ENCODE measurements at regions of chr5 and their contacts with region 1.

Region 1: GRCh38 chr5:73321757-73322436 is 126.7 kb downstream of the FOXD1 start:
- DNase-seq: peak; percentile 99
- H3K4me3 ChIP-seq: no peak overlapping the region
- H3K27ac ChIP-seq: peak overlapping the region; percentile 70
- H3K4me1 ChIP-seq: peaks cover 24% of the 10 kb centered on the region
- H3K27me3 ChIP-seq: no peaks in the 10 kb centered on the region
- CTCF ChIP-seq: no peak

Region 2: DNA sequence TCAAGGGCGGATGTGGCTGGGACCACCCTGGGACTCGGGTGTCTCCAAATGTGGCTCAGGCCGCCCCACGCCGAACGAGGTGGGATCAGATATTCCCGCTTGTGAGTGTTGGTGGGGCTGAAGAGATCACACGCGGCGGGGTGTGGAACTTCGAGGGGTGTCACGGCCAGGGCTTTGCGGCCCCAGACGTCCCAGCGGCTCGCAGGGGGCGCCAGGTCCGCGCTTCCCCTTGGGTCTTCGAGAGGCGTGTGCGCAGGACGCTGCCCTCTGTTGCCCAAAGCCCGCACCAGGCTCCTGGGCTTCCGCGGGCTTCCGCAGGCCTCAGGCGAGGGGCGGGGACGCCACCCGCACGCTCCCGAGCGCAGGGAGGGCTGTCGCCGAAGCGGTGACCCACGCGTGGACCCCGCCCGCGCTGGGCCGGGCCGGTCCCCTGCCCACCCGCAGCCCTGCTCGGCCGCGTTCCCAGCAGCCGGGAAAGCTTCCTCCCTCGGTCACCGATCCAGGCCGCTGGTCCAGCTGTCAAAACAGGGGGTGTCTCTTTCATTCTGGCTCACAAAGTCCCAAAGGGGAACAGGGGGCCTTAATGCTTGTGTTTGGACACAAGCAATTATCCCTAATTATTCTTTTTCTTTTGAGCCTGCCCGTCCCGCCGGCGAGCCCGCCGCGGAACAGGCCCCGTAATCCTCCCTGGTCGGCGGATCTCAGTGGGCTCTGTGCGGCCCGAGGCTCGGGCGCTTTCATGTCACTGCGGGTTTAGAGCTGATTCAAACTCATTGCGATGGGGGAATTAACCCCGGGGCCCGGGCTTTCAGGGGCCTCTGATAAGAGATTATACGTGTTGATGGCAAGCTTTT is 88.3 kb before region 1 on chr5:
- CTCF ChIA-PET with region 1: no interaction called
- dilution Hi-C with region 1: loop called (anchors 5 kb)
- in situ Hi-C with region 1: no loop called
- intact Hi-C with region 1: no loop called
- DNase-seq: no peak
- H3K4me3 ChIP-seq: no peak overlapping the region
- H3K27ac ChIP-seq: no peak overlapping the region
- H3K4me1 ChIP-seq: peaks cover 28% of the 10 kb centered on the region
- H3K27me3 ChIP-seq: no peaks in the 10 kb centered on the region
- CTCF ChIP-seq: no peak

Region 3: GRCh38 chr5:73311291-73312110 is 10.4 kb before region 1 on chr5:
- CTCF ChIA-PET with region 1: no interaction called
- dilution Hi-C with region 1: no loop called
- in situ Hi-C with region 1: no loop called
- intact Hi-C with region 1: loop called (anchors 1 kb)
- DNase-seq: peak; percentile 85
- H3K4me3 ChIP-seq: peak overlapping the region in 1 of 3 experiments; percentile 3
- H3K27ac ChIP-seq: peak overlapping the region; percentile 63
- H3K4me1 ChIP-seq: peaks cover 29% of the 10 kb centered on the region
- H3K27me3 ChIP-seq: no peaks in the 10 kb centered on the region
- CTCF ChIP-seq: no peak

Region 4: DNA sequence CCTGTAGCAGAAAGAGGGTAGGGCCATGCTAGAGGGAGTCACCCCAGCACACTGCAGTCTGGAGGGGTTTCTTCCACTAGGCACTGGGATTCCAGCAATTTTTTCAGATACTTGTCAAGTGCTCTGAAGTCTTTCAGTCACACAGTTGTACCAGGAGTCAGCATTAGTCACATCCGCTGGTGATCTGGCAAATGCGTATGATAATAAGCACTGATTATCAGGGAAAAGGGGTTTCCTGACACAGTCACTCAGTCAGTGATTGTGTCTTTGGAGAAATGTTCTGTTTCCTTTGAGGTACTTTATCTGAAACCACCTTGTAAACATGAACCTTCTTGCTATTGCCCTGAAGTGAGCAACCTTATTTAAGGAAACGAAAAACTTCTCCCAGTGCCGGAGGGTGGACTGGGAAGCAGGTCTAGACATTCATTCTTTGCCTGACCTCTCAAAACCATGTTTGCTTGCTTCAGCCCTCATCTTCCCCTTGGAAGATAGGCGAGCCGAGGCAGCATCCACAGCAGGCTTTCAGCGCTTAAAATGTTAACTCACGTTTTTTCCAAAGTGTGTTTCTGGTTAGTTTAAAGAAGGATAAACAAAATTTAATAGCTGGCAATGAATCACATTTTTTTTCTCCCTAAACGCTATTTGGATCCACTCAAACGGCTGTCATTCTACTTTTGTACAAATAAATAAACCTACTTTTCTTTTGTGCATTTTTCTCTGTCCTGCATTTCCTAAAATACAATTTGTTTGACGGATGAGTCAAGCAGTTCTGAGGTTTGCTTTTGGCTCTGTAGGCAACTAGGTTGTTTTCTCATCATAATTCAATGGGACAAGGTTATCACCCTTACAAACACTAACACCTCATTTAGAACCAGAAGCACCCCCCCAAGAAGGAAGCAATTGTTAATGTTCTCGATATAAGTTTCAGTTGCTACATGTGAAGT is 49.0 kb after region 1 on chr5:
- CTCF ChIA-PET with region 1: no interaction called
- dilution Hi-C with region 1: no loop called
- in situ Hi-C with region 1: loop called in 1 of 2 experiments (anchors 5 kb)
- intact Hi-C with region 1: loop called (anchors 1 kb)
- DNase-seq: peak; percentile 99
- H3K4me3 ChIP-seq: no peak overlapping the region
- H3K27ac ChIP-seq: peak overlapping the region; percentile 83
- H3K4me1 ChIP-seq: peaks cover 57% of the 10 kb centered on the region
- H3K27me3 ChIP-seq: no peaks in the 10 kb centered on the region
- CTCF ChIP-seq: no peak

Region 5: GRCh38 chr5:73419465-73420390 is 97.8 kb after region 1 on chr5:
- CTCF ChIA-PET with region 1: no interaction called
- dilution Hi-C with region 1: loop called (anchors 5 kb)
- in situ Hi-C with region 1: no loop called
- intact Hi-C with region 1: no loop called
- DNase-seq: no peak
- H3K4me3 ChIP-seq: peak overlapping the region in 2 of 3 experiments; percentile 22 to 31
- H3K27ac ChIP-seq: no peak overlapping the region
- H3K4me1 ChIP-seq: peaks cover 16% of the 10 kb centered on the region
- H3K27me3 ChIP-seq: no peaks in the 10 kb centered on the region
- CTCF ChIP-seq: no peak

Measured in mammary epithelial cell (primary cell).